ENCODE measurements at regions of chr17 and their contacts with region 1.

Region 1: GRCh38 chr17:35981908-35982330 is 622 bp upstream of the CCL16 start:
- DNase-seq: no peak
- ATAC-seq: peak; percentile 54
- H3K4me3 Mint-ChIP-seq: no peak overlapping the region
- H3K27ac Mint-ChIP-seq: no peak overlapping the region
- H3K4me1 Mint-ChIP-seq: peaks cover 12% of the 10 kb centered on the region
- H3K27me3 Mint-ChIP-seq: peaks cover 11% of the 10 kb centered on the region
- CTCF ChIP-seq: no peak

Region 2: GRCh38 chr17:35752945-35753764 is 228.8 kb before region 1 on chr17 and contains the start of gene GAS2L2:
- CTCF ChIA-PET with region 1: no interaction called
- POLR2A ChIA-PET with region 1: no interaction called
- intact Hi-C with region 1: no loop called
- DNase-seq: no peak
- ATAC-seq: no peak
- H3K4me3 Mint-ChIP-seq: no peak within 1 kb of the TSS
- H3K27ac Mint-ChIP-seq: no peak within 1 kb of the TSS
- H3K4me1 Mint-ChIP-seq: peaks cover 11% of the 10 kb centered on the region
- H3K27me3 Mint-ChIP-seq: peaks cover 39% of the 10 kb centered on the region
- CTCF ChIP-seq: no peak
- total RNA-seq, gene GAS2L2: not detected in 2 replicates

Region 3: GRCh38 chr17:35879773-35880654 is 101.9 kb before region 1 on chr17 and contains the start of gene CCL5:
- CTCF ChIA-PET with region 1: no interaction called
- POLR2A ChIA-PET with region 1: no interaction called
- intact Hi-C with region 1: no loop called
- DNase-seq: peak; percentile 19
- ATAC-seq: peak; percentile 89
- H3K4me3 Mint-ChIP-seq: peak within 1 kb of the TSS; percentile 76
- H3K27ac Mint-ChIP-seq: peak within 1 kb of the TSS; percentile 62
- H3K4me1 Mint-ChIP-seq: peaks cover 34% of the 10 kb centered on the region
- H3K27me3 Mint-ChIP-seq: no peaks in the 10 kb centered on the region
- CTCF ChIP-seq: no peak
- total RNA-seq, gene CCL5: 3.3 and 3.4 TPM in 2 replicates

Region 4: GRCh38 chr17:35953720-35954119 is 28.2 kb before region 1 on chr17:
- CTCF ChIA-PET with region 1: no interaction called
- POLR2A ChIA-PET with region 1: no interaction called
- intact Hi-C with region 1: no loop called
- DNase-seq: no peak
- ATAC-seq: no peak
- H3K4me3 Mint-ChIP-seq: no peak overlapping the region
- H3K27ac Mint-ChIP-seq: no peak overlapping the region
- H3K4me1 Mint-ChIP-seq: no peaks in the 10 kb centered on the region
- H3K27me3 Mint-ChIP-seq: peaks cover 34% of the 10 kb centered on the region
- CTCF ChIP-seq: no peak

Region 5: DNA sequence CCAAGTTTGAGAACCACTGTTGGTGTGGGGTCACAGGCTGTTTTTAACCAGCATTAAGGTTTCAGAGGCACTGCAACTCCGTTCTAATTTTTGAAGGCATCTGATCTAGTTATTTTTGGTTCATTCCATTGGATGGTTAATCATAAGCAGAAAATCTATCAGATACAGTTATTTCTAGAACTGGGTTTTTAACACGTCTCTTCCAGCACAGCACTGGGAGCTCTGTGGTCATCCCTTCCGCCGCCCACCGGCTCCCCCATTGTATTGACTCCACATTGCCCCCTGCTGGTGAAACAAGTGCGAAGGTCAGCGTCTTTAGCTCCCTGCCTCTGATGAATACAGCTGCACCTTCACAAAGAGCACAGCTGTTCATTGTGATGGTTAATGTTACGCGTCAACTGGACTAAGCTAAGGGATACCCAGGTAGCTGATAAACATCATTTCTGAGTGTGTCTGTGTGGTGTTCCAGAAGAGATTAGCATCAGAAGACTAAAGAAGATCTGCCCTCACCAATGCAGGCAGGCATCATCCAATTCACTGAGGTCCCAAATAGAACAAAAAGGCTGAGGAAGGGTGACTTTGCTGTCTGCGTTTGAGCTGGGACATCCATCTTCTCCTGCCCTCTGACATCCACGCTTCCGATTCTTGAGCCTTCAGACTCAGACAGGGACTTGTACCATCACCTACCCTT is 90.7 kb after region 1 on chr17:
- CTCF ChIA-PET with region 1: interaction called, 16 read pairs
- POLR2A ChIA-PET with region 1: no interaction called
- intact Hi-C with region 1: no loop called
- DNase-seq: no peak
- ATAC-seq: peak; percentile 69
- H3K4me3 Mint-ChIP-seq: no peak overlapping the region
- H3K27ac Mint-ChIP-seq: no peak overlapping the region
- H3K4me1 Mint-ChIP-seq: peaks cover 9% of the 10 kb centered on the region
- H3K27me3 Mint-ChIP-seq: peaks cover 4% of the 10 kb centered on the region
- CTCF ChIP-seq: peak; percentile 59

Measured in activated B cell treated with CpG ODN at 0.5 μM for 24 hours (primary cell).